CD4-positive, alpha-beta T cell (primary cell): ENCODE measurements at regions of chrX and their contacts with region 1.

Region 1: DNA sequence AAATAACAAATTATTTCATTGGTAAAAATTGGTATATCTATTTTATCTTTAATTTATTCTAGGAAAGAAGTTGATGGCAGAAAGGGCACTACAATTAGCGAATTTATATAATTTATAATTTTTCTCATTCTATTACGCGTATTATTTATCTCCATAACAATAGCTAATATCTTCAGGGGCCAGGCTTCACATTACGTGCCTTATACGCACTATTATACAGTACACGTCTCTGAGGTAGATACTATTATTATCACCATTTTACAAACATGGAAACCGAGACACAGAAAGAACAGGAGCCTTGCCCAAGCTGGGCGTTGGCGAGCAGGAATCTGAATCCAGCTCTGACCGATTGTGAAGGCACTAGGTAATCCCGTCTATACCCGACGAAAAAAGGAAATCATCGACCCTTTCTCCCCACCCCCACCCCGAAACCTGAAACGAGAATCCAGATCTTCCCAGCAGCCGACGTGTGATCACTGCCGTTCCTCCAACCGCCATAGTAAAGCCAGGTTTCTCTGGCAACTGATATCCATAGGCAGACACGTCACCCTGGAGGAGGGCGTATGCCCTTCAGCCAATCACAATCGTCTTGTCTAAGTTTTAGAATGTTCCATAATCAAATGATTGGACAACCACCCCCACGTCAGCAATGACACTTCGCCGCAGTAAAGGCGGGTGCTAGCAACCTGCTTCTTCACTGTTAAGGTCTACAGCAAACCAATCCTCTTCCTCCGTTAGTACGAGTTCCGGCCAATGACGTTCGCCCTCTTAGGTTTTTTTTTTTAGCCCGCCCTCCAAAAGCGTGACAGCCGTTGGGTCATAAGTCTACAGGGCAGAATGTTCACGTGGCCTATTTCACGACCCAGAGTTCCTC is at the start of gene MORF4L2:
- DNase-seq: peak; percentile 67 to 96 (median 80)
- ATAC-seq: peak; percentile 82
- H3K4me3 ChIP-seq: peak within 1 kb of the TSS; percentile 76
- H3K4me3 Mint-ChIP-seq: peak within 1 kb of the TSS; percentile 85
- H3K27ac ChIP-seq: peak within 1 kb of the TSS; percentile 92 to 99
- H3K27ac Mint-ChIP-seq: no peak within 1 kb of the TSS
- H3K4me1 ChIP-seq: no peaks in the 10 kb centered on the region
- H3K4me1 Mint-ChIP-seq: peaks cover 4% of the 10 kb centered on the region
- H3K27me3 ChIP-seq: no peaks in the 10 kb centered on the region
- H3K27me3 Mint-ChIP-seq: no peaks in the 10 kb centered on the region
- CTCF ChIP-seq: no peak
- total RNA-seq, gene MORF4L2: 201 to 212 TPM

Region 2: DNA sequence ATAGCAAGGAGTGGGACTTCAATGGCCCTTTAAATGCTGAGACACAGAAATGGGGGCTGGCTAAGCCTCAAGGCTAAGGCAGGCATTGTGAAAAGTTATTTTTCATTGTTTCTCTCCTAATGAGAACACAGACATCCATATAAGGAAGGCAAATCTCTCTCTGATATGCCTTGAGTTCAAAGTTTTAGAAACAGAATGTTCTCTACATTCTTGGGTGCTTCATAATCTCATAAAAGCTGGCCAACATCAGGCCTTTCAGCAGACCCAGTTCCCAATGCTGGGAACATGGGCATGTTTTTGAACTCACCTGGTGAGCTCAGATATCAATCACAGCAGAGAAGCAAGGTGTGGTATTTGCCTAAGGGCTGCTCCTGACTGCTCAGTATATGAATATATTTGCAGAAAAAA is 147.7 kb before region 1 on chrX:
- CTCF ChIA-PET with region 1: no interaction called
- POLR2A ChIA-PET with region 1: no interaction called
- intact Hi-C with region 1: loop called (anchors 5 to 10 kb)
- DNase-seq: no peak
- ATAC-seq: no peak
- H3K4me3 ChIP-seq: no peak overlapping the region
- H3K4me3 Mint-ChIP-seq: no peak overlapping the region
- H3K27ac ChIP-seq: no peak overlapping the region
- H3K27ac Mint-ChIP-seq: no peak overlapping the region
- H3K4me1 ChIP-seq: peaks cover 2% of the 10 kb centered on the region
- H3K4me1 Mint-ChIP-seq: peaks cover under 1% of the 10 kb centered on the region
- H3K27me3 ChIP-seq: no peaks in the 10 kb centered on the region
- H3K27me3 Mint-ChIP-seq: no peaks in the 10 kb centered on the region
- CTCF ChIP-seq: no peak

Region 3: DNA sequence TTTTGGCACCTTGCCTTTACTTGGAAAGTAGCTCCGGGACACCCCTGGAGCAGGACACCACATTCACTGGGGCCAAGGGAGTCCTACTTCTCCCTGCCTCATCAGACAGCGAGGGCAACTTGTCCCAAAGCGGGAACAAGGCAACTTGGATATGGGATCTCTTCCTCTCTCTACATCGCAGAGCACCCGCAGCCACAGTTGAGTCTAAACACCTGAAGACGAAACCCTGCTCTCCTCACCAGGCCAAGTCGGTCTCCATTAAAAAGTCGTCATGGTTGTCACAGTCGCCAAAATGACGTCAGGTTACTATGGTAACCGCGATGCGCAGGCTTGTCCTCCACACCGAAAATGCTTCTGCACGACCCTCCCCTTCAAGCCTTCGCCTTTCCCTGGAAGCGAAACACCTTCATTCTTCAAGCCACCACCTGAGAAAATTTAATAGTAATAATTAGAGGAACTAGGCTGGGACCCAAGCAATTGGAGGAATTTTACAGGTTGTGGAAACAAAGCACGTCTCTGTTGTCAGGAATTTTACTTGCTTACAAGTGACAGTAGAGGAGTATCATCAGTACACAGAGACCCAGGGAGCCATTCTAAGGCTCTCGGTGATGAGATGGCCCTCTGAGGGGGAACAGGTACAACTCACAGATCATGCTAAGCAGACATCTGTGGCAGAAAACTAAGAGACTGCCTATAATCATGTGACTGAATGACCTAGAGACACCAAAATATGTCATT is 131.6 kb before region 1 on chrX:
- CTCF ChIA-PET with region 1: no interaction called
- POLR2A ChIA-PET with region 1: no interaction called
- intact Hi-C with region 1: no loop called
- DNase-seq: peak; percentile 13 to 85 (median 45)
- ATAC-seq: peak; percentile 88
- H3K4me3 ChIP-seq: peak overlapping the region; percentile 60
- H3K4me3 Mint-ChIP-seq: peak overlapping the region; percentile 90
- H3K27ac ChIP-seq: peak overlapping the region in 1 of 2 donors; percentile 30
- H3K27ac Mint-ChIP-seq: peak overlapping the region; percentile 84
- H3K4me1 ChIP-seq: peaks cover 6% of the 10 kb centered on the region
- H3K4me1 Mint-ChIP-seq: peaks cover 12% of the 10 kb centered on the region
- H3K27me3 ChIP-seq: no peaks in the 10 kb centered on the region
- H3K27me3 Mint-ChIP-seq: no peaks in the 10 kb centered on the region
- CTCF ChIP-seq: no peak

Region 4: DNA sequence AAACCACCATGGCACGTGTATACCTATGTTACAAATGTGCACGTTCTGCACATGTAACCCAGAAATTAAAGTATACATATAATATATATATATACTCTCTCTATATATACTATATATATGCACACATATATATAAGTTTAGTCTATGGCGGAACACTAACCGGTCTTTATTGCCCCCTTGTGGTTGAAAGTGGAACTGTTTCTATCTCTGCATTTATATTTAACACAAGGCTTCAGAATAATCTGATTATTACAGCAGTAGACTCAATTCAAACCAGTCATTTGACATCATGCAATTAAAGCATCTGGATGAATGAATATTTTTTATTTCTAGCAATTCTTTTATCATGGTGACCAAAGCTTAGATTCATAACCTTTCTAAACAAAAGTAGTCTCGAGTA is 131.1 kb after region 1 on chrX:
- CTCF ChIA-PET with region 1: no interaction called
- POLR2A ChIA-PET with region 1: no interaction called
- intact Hi-C with region 1: loop called (anchors 5 kb)
- DNase-seq: peak in 5 of 14 experiments; percentile 9 to 73 (median 59)
- ATAC-seq: peak; percentile 55
- H3K4me3 ChIP-seq: no peak overlapping the region
- H3K4me3 Mint-ChIP-seq: no peak overlapping the region
- H3K27ac ChIP-seq: no peak overlapping the region
- H3K27ac Mint-ChIP-seq: no peak overlapping the region
- H3K4me1 ChIP-seq: no peaks in the 10 kb centered on the region
- H3K4me1 Mint-ChIP-seq: no peaks in the 10 kb centered on the region
- H3K27me3 ChIP-seq: no peaks in the 10 kb centered on the region
- H3K27me3 Mint-ChIP-seq: peaks cover 14% of the 10 kb centered on the region
- CTCF ChIP-seq: peak; percentile 60

Region 5: DNA sequence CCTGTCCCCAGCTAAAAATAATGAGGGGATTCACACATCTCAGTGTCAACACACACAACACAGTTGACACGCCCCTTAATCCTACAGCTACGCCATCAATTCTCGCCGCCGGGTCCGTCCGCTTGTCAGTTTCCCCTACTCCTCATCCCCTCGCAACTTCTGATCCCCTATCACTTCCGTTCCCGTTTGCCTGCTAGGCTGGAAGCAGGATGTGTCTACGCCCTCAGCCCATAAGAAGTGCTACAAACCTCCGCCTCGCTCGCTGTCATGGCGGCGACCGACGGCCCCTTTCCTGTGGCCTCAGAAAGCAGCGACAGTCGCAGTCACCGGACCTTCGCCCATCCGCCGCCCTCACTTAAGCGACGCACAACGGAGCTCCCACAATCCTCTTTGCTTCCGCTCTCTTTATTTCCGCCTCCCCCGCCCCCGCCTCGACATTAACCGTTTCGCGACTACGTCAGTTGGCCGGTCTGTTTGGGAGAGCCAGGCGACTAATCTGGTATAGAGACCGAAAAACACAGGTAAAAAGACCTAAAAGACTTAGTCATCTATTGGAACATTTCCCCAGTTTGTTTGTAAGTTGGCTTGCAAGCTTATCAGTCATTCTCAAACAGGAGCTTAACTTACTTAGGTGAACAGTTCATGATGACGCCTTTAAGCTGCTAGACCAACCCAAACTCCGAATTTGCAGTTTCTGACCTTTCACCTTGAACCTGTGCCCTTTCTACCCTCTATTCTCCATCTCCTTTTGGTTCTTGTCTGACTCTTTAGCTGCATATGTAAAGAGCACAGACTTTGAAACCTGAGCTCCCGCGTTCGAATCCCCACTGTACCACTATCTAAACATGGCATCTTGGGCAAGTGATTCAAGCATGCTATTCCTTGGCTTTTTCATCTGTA is 470.4 kb after region 1 on chrX and contains the start of gene SLC25A53:
- CTCF ChIA-PET with region 1: no interaction called
- POLR2A ChIA-PET with region 1: interaction called, 10 read pairs
- intact Hi-C with region 1: loop called in 1 of 2 experiments (anchors 10 kb)
- DNase-seq: peak; percentile 48 to 90 (median 66)
- ATAC-seq: peak; percentile 78
- H3K4me3 ChIP-seq: peak within 1 kb of the TSS; percentile 73
- H3K4me3 Mint-ChIP-seq: peak within 1 kb of the TSS; percentile 94
- H3K27ac ChIP-seq: peak within 1 kb of the TSS; percentile 75 to 83
- H3K27ac Mint-ChIP-seq: peak within 1 kb of the TSS; percentile 98
- H3K4me1 ChIP-seq: peaks cover 18% of the 10 kb centered on the region
- H3K4me1 Mint-ChIP-seq: peaks cover 21% of the 10 kb centered on the region
- H3K27me3 ChIP-seq: no peaks in the 10 kb centered on the region
- H3K27me3 Mint-ChIP-seq: no peaks in the 10 kb centered on the region
- CTCF ChIP-seq: no peak
- total RNA-seq, gene SLC25A53: 5.1 TPM

Region 6: DNA sequence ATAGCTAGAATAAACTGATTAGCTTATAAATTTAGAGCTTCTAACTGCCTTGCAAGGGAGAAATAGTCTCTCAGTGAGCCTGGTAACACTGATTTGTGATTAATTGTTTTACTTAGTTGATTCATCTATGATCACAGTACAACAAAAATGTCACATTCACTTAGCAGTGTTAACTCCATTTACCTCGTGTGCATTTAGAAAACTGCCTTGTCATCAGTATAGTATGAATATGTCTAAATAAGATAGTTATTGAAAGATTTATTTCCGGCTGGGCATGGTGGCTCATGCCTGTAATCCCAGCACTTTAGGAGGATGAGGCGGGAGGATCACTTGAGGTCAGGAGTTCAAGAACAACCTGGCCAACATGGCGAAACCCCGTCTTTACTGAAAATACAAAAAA is 519.1 kb after region 1 on chrX:
- CTCF ChIA-PET with region 1: no interaction called
- POLR2A ChIA-PET with region 1: no interaction called
- intact Hi-C with region 1: no loop called
- DNase-seq: no peak
- ATAC-seq: no peak
- H3K4me3 ChIP-seq: no peak overlapping the region
- H3K4me3 Mint-ChIP-seq: no peak overlapping the region
- H3K27ac ChIP-seq: no peak overlapping the region
- H3K27ac Mint-ChIP-seq: no peak overlapping the region
- H3K4me1 ChIP-seq: no peaks in the 10 kb centered on the region
- H3K4me1 Mint-ChIP-seq: no peaks in the 10 kb centered on the region
- H3K27me3 ChIP-seq: no peaks in the 10 kb centered on the region
- H3K27me3 Mint-ChIP-seq: no peaks in the 10 kb centered on the region
- CTCF ChIP-seq: no peak